Prostate gland (tissue), 2 donors: ENCODE measurements at regions of chr1 and their contacts with region 1.

Region 1: GRCh38 chr1:151399890-151400495 is 620 bp downstream of the PSMB4 start:
- DNase-seq: no peak
- H3K4me3 ChIP-seq: peak overlapping the region; percentile 94 to 96
- H3K27ac ChIP-seq: peak overlapping the region; percentile 84 to 85
- H3K4me1 ChIP-seq: peaks cover 7% of the 10 kb centered on the region
- H3K27me3 ChIP-seq: no peaks in the 10 kb centered on the region
- CTCF ChIP-seq: no peak
- POLR2A ChIP-seq: no peak

Region 2: DNA sequence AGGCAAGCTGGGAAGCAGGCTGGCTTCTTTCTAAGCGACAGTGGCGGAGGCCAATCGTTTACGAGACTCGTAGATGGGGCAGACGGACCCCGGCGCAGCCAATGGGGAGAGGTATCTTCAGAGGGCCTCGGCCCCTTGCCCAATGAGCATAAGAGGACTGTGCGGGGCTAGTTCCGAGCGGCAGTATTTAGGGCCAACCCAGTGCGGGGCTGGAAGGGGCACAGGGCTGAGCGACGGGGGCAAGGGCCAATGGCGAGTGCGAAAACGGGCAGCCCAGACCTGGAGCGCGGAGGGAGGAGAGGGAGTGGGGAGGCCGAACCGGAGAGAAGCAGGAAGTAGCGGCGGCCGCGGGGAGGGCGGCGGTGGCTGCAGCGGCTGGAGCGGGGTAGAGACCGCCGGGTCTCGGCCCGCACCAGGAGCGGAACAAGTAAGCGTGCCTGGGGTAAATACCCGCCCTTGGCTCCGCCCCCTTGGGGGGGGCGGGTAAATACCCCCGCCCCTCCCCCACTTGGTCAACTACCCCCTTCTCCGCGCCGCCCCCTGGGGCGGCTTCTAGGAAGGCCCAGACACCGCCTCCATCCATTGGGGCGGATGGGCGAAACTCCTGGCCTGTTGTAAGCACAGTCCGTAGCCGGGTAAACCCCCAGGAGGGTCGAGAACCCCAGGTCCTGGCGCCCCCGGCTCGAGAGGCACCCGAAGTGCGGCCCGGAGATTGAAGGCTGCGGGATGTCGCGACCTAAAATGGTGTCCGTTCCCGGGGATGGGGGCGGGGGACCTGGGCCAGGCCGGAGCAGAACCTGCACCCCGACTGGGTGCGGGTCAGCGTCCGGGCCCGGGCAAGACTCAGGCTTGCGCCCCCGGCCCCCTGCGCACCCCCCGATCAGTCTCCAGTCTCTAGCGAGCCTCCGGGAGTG is 117.8 kb before region 1 on chr1 and contains the start of gene ZNF687:
- intact Hi-C with region 1: loop called (anchors 5 kb)
- DNase-seq: peak; percentile 100
- H3K4me3 ChIP-seq: peak within 1 kb of the TSS; percentile 68 to 73
- H3K27ac ChIP-seq: peak within 1 kb of the TSS; percentile 98 to 99
- H3K4me1 ChIP-seq: no peaks in the 10 kb centered on the region
- H3K27me3 ChIP-seq: no peaks in the 10 kb centered on the region
- CTCF ChIP-seq: no peak
- POLR2A ChIP-seq: peak; percentile 71
- total RNA-seq, gene ZNF687: 30.1 to 46.4 TPM

Region 3: GRCh38 chr1:151309811-151310323 is 90.1 kb before region 1 on chr1:
- intact Hi-C with region 1: loop called (anchors 5 kb)
- DNase-seq: no peak
- H3K4me3 ChIP-seq: no peak overlapping the region
- H3K27ac ChIP-seq: peak overlapping the region in 1 of 2 donors; percentile 24
- H3K4me1 ChIP-seq: peaks cover 4% of the 10 kb centered on the region
- H3K27me3 ChIP-seq: no peaks in the 10 kb centered on the region
- CTCF ChIP-seq: no peak
- POLR2A ChIP-seq: no peak

Region 4: GRCh38 chr1:151346769-151347522 is 53.0 kb before region 1 on chr1 and contains the start of gene RFX5:
- intact Hi-C with region 1: loop called (anchors 1 kb)
- DNase-seq: peak; percentile 95
- H3K4me3 ChIP-seq: peak within 1 kb of the TSS; percentile 54 to 59
- H3K27ac ChIP-seq: peak within 1 kb of the TSS; percentile 80 to 87
- H3K4me1 ChIP-seq: peaks cover 4% of the 10 kb centered on the region
- H3K27me3 ChIP-seq: no peaks in the 10 kb centered on the region
- CTCF ChIP-seq: no peak
- POLR2A ChIP-seq: no peak
- total RNA-seq, gene RFX5: 25.5 to 27.2 TPM

Region 5: DNA sequence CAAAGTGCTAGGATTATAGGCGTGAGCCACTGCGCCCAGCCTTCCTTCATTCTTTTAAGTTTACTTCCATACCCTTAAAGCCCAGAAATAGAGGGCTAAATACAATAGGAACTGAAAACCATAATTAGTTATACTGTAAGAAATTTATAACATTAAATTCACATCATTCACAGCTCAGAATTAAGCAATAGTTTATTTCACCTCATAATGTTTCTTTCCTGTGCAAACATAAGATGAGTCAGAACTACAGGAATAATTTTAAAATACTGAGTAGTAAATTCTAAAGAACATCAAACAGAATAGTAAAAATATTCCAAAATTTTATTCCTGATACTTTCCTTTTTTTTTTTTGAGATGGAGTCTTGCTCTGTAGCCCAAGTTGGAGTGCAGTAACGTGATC is 35.2 kb after region 1 on chr1:
- intact Hi-C with region 1: loop called (anchors 2 kb)
- DNase-seq: no peak
- H3K4me3 ChIP-seq: no peak overlapping the region
- H3K27ac ChIP-seq: no peak overlapping the region
- H3K4me1 ChIP-seq: no peaks in the 10 kb centered on the region
- H3K27me3 ChIP-seq: no peaks in the 10 kb centered on the region
- CTCF ChIP-seq: no peak
- POLR2A ChIP-seq: no peak

Region 6: DNA sequence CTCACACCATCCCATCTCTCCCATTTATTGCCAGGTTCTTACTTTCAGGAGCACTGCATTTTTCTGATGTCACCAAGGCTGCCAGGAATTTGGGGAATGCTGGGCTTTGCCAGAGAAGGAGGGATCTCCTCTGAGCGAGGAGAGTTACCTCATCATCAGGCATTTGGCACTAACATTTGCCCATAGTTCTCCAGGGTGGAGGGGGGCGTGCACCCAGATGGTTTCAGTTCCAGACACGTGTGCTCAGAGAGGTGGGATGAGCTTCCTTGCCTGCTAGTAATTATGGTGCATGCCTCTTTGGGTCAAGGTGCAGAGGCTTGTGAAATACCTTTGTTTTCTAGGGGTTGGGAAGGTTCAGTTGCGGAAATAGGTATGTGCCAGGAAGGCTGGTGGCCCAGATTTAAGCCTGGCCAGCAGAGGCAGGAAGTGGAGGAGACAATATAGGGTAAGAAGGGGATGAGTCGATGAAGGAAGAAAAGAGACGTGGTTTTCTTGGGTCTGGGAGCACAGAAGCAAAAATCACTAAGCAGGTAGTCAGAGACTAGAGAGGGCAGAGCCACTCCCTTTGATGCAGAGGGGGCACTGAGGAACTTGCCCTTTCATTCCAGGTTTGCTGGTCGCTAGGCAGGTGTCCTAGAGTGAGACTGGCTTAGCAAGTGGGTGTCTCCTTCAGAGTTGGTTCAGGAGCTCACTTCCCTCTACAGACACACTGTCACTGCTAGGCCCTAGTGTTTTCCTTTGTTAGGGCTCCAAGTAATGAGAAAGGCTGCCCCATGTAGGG is 147.3 kb after region 1 on chr1:
- intact Hi-C with region 1: no loop called
- DNase-seq: peak; percentile 84
- H3K4me3 ChIP-seq: no peak overlapping the region
- H3K27ac ChIP-seq: peak overlapping the region; percentile 58 to 66
- H3K4me1 ChIP-seq: peaks cover 5% of the 10 kb centered on the region
- H3K27me3 ChIP-seq: no peaks in the 10 kb centered on the region
- CTCF ChIP-seq: no peak
- POLR2A ChIP-seq: no peak